ENCODE measurements at regions of chr6 and their contacts with region 1.

Region 1: DNA sequence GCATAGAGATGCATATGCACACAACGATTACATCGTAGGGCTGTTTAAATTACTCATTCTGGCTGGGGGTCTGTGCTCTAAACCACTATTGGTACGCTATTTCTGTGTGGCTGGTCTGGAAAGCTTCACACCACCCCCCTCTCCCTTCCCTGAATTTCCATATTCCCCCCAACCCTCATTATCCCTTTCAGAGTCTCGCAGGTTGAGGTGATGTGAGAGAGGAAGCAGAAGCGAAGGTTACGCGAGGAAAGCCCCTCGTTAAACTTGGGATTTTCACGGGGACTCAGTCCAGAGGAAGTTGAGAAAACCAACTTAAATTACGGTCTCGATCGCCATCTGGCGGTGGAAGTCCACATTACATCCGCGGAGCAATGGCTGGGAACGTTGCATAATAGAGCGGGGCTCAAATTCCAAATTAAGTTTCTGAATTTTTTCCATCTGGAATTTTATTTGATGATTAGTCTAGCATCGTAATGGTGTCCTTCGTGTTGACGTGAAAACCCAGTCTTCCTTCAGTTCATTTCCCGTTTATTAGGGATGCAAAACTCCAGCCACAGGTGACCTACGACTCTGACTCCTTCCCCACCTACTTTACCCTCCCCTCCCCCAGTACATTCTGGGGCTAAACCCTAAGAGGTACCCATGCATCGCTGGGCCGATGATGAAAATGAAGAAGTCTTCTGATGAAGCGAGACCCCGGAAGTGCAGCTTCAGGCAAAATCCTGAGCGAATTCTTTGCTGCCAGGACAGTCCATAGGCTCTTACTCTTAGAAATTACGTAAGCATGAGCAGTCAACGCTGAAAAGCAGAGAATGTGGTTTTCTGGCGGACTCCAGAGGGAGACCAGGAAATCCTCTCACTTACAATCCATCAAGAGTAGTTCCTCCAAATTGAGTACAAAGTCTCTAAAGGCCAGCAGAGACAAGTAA is 19.7 kb downstream of the HLA-DOB start:
- DNase-seq: peak; percentile 92
- ATAC-seq: peak; percentile 83
- H3K4me3 ChIP-seq: peak overlapping the region in 4 of 5 experiments; percentile 26 to 53 (median 42)
- H3K4me3 Mint-ChIP-seq: peak overlapping the region; percentile 90
- H3K27ac ChIP-seq: peak overlapping the region; percentile 60 to 64
- H3K27ac Mint-ChIP-seq: peak overlapping the region; percentile 93
- H3K4me1 ChIP-seq: peaks cover 26 to 32% of the 10 kb centered on the region in 2 donors
- H3K4me1 Mint-ChIP-seq: peaks cover 40% of the 10 kb centered on the region
- H3K27me3 ChIP-seq: no peaks in the 10 kb centered on the region
- H3K27me3 Mint-ChIP-seq: no peaks in the 10 kb centered on the region
- CTCF ChIP-seq: peak; percentile 91

Region 2: GRCh38 chr6:32127717-32128592 is 669.2 kb before region 1 on chr6 and contains the start of gene ATF6B:
- CTCF ChIA-PET with region 1: no interaction called
- POLR2A ChIA-PET with region 1: no interaction called
- intact Hi-C with region 1: loop called (anchors 10 kb)
- DNase-seq: peak; percentile 98
- ATAC-seq: peak; percentile 92
- H3K4me3 ChIP-seq: peak within 1 kb of the TSS; percentile 82 to 100 (median 99)
- H3K4me3 Mint-ChIP-seq: peak within 1 kb of the TSS; percentile 98
- H3K27ac ChIP-seq: peak within 1 kb of the TSS; percentile 62 to 91
- H3K27ac Mint-ChIP-seq: peak within 1 kb of the TSS; percentile 95
- H3K4me1 ChIP-seq: peaks cover 26 to 36% of the 10 kb centered on the region in 2 donors
- H3K4me1 Mint-ChIP-seq: peaks cover 48% of the 10 kb centered on the region
- H3K27me3 ChIP-seq: no peaks in the 10 kb centered on the region
- H3K27me3 Mint-ChIP-seq: no peaks in the 10 kb centered on the region
- CTCF ChIP-seq: no peak
- total RNA-seq, gene ATF6B: 201 and 206 TPM in 2 replicates

Region 3: GRCh38 chr6:32432050-32432450 is 365.1 kb before region 1 on chr6:
- CTCF ChIA-PET with region 1: interaction called, 10 read pairs
- POLR2A ChIA-PET with region 1: no interaction called
- intact Hi-C with region 1: no loop called
- DNase-seq: peak; percentile 78
- ATAC-seq: peak; percentile 38
- H3K4me3 ChIP-seq: no peak overlapping the region
- H3K4me3 Mint-ChIP-seq: no peak overlapping the region
- H3K27ac ChIP-seq: no peak overlapping the region
- H3K27ac Mint-ChIP-seq: peak overlapping the region; percentile 63
- H3K4me1 ChIP-seq: peaks cover 21 to 27% of the 10 kb centered on the region in 2 donors
- H3K4me1 Mint-ChIP-seq: peaks cover 32% of the 10 kb centered on the region
- H3K27me3 ChIP-seq: no peaks in the 10 kb centered on the region
- H3K27me3 Mint-ChIP-seq: no peaks in the 10 kb centered on the region
- CTCF ChIP-seq: peak; percentile 83

Region 4: GRCh38 chr6:32609731-32610640 is 187.1 kb before region 1 on chr6:
- CTCF ChIA-PET with region 1: no interaction called
- POLR2A ChIA-PET with region 1: no interaction called
- intact Hi-C with region 1: no loop called
- DNase-seq: peak; percentile 99
- ATAC-seq: peak; percentile 88
- H3K4me3 ChIP-seq: peak overlapping the region in 4 of 5 experiments; percentile 25 to 41 (median 30)
- H3K4me3 Mint-ChIP-seq: no peak overlapping the region
- H3K27ac ChIP-seq: peak overlapping the region; percentile 99 to 100
- H3K27ac Mint-ChIP-seq: no peak overlapping the region
- H3K4me1 ChIP-seq: peaks cover 47 to 53% of the 10 kb centered on the region in 2 donors
- H3K4me1 Mint-ChIP-seq: peaks cover 59% of the 10 kb centered on the region
- H3K27me3 ChIP-seq: no peaks in the 10 kb centered on the region
- H3K27me3 Mint-ChIP-seq: no peaks in the 10 kb centered on the region
- CTCF ChIP-seq: no peak

Region 5: DNA sequence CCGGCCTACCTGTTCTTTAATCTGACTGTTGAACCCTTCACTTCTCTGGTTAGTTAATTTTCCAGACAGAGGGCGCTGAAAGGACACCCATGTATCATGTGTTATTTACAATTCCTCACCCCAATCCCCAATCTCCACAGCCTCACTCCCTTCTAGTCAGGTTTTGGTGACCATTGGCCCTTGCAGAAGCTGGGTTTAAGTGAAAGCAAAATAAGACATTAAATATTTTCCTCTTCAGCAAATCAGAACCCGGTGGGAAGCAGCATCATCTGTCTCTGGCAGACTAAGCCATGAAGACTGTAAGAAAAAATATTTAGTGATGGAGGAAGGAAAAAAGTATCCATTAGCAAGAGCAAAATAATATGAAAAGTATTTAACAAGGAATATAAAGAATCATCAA is 169.3 kb before region 1 on chr6:
- CTCF ChIA-PET with region 1: no interaction called
- POLR2A ChIA-PET with region 1: no interaction called
- intact Hi-C with region 1: no loop called
- DNase-seq: peak; percentile 87
- ATAC-seq: peak; percentile 55
- H3K4me3 ChIP-seq: peak overlapping the region in 4 of 5 experiments; percentile 16 to 40 (median 30)
- H3K4me3 Mint-ChIP-seq: peak overlapping the region; percentile 95
- H3K27ac ChIP-seq: peak overlapping the region; percentile 92 to 97
- H3K27ac Mint-ChIP-seq: peak overlapping the region; percentile 100
- H3K4me1 ChIP-seq: peaks cover 60% of the 10 kb centered on the region in 2 donors
- H3K4me1 Mint-ChIP-seq: peaks cover 78% of the 10 kb centered on the region
- H3K27me3 ChIP-seq: no peaks in the 10 kb centered on the region
- H3K27me3 Mint-ChIP-seq: no peaks in the 10 kb centered on the region
- CTCF ChIP-seq: no peak

Region 6: DNA sequence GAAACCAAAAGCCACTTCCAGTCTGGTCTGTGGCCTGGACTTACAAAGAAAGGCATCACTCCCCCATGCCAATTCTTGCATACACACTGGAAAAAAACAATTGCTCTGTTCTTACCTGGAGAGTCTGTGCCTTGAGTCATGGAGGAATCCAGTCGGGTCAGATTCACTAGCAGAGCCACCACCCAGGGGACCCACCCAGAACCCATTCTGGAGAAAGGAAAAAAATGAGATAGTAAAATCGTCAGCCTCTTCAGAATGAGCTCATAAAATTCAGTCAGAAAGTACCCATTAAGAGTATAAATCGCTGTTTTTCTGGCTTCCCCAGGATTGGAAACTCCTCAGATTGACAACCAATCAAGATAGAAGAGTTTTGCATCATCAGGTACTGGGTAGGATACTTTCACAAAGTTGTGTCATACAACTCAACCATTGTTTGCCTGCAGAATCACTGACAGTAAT is 19.7 kb after region 1 on chr6 and contains the start of gene HLA-DOB:
- CTCF ChIA-PET with region 1: interaction called, 8 read pairs
- POLR2A ChIA-PET with region 1: no interaction called
- intact Hi-C with region 1: loop called (anchors 1 kb)
- DNase-seq: peak; percentile 87
- ATAC-seq: peak; percentile 76
- H3K4me3 ChIP-seq: peak within 1 kb of the TSS; percentile 91 to 97 (median 95)
- H3K4me3 Mint-ChIP-seq: peak within 1 kb of the TSS; percentile 99
- H3K27ac ChIP-seq: peak within 1 kb of the TSS; percentile 92 to 98
- H3K27ac Mint-ChIP-seq: peak within 1 kb of the TSS; percentile 99
- H3K4me1 ChIP-seq: peaks cover 77 to 80% of the 10 kb centered on the region in 2 donors
- H3K4me1 Mint-ChIP-seq: peaks cover 90% of the 10 kb centered on the region
- H3K27me3 ChIP-seq: no peaks in the 10 kb centered on the region
- H3K27me3 Mint-ChIP-seq: no peaks in the 10 kb centered on the region
- CTCF ChIP-seq: no peak
- total RNA-seq, gene HLA-DOB: 109 TPM in 2 replicates

Region 7: DNA sequence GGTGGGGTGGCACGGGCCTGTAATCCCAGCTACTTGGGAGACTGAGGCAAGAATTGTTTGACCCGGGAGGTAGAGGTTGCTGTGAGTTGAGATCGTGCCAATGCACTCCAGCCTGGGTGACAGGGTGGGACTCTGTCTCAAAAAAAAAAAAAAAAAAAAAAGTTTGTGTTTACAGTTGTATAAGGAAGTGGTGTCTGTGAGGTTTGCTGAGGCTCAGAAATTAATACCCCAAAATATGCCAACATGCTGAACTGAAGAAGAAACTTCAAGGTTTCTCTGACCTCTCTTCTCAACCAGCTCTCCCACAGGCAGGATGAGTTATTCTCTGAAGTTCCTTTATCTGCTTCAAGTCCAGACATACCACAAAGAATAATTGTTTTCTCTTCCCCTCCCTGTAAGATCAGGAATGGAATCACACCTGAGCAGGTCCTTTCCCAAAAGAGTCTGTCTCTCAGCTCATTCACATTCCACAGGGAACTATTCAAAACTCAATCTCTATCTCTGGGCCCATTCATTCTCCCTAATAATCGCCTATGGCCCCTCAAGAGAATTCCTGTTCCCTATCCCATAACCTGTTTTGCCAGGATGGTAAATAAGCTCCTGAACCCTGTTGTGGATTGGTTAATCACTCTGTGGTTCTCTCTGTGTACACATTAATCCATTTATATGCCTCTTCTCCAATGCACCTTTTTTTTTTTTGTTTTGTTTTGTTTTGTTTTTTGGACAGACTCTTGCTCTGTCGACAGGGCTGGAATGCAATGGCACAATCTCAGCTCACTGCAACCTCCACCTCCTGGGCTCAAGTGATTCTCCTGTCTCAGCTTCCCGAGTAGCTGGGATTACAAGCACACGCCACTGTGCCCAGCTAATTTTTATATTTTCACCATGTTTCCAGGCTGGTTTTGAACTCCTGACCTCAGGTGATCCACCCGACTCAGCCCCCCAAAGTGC is 577.1 kb after region 1 on chr6:
- CTCF ChIA-PET with region 1: no interaction called
- POLR2A ChIA-PET with region 1: no interaction called
- intact Hi-C with region 1: no loop called
- DNase-seq: no peak
- ATAC-seq: no peak
- H3K4me3 ChIP-seq: no peak overlapping the region
- H3K4me3 Mint-ChIP-seq: no peak overlapping the region
- H3K27ac ChIP-seq: no peak overlapping the region
- H3K27ac Mint-ChIP-seq: no peak overlapping the region
- H3K4me1 ChIP-seq: no peaks in the 10 kb centered on the region
- H3K4me1 Mint-ChIP-seq: no peaks in the 10 kb centered on the region
- H3K27me3 ChIP-seq: no peaks in the 10 kb centered on the region
- H3K27me3 Mint-ChIP-seq: no peaks in the 10 kb centered on the region
- CTCF ChIP-seq: no peak